ENCODE measurements at regions of chr14 and their contacts with region 1.

Region 1: GRCh38 chr14:61837336-61838229 is 75.4 kb downstream of the SNAPC1 start:
- DNase-seq: peak; percentile 88
- H3K4me3 Mint-ChIP-seq: no peak overlapping the region
- H3K27ac Mint-ChIP-seq: no peak overlapping the region
- H3K4me1 Mint-ChIP-seq: peaks cover 12% of the 10 kb centered on the region
- H3K27me3 Mint-ChIP-seq: no peaks in the 10 kb centered on the region

Region 2: GRCh38 chr14:61456720-61457119 is 380.9 kb before region 1 on chr14:
- CTCF ChIA-PET with region 1: interaction called, 63 read pairs
- intact Hi-C with region 1: loop called (anchors 1 kb)
- DNase-seq: peak; percentile 94
- H3K4me3 Mint-ChIP-seq: no peak overlapping the region
- H3K27ac Mint-ChIP-seq: peak overlapping the region; percentile 66
- H3K4me1 Mint-ChIP-seq: peaks cover 82% of the 10 kb centered on the region
- H3K27me3 Mint-ChIP-seq: no peaks in the 10 kb centered on the region

Region 3: GRCh38 chr14:61503167-61503801 is 334.3 kb before region 1 on chr14:
- CTCF ChIA-PET with region 1: interaction called, 6 read pairs
- intact Hi-C with region 1: loop called (anchors 1 kb)
- DNase-seq: peak; percentile 92
- H3K4me3 Mint-ChIP-seq: peak overlapping the region; percentile 66
- H3K27ac Mint-ChIP-seq: peak overlapping the region; percentile 100
- H3K4me1 Mint-ChIP-seq: peaks cover 97% of the 10 kb centered on the region
- H3K27me3 Mint-ChIP-seq: no peaks in the 10 kb centered on the region

Region 4: DNA sequence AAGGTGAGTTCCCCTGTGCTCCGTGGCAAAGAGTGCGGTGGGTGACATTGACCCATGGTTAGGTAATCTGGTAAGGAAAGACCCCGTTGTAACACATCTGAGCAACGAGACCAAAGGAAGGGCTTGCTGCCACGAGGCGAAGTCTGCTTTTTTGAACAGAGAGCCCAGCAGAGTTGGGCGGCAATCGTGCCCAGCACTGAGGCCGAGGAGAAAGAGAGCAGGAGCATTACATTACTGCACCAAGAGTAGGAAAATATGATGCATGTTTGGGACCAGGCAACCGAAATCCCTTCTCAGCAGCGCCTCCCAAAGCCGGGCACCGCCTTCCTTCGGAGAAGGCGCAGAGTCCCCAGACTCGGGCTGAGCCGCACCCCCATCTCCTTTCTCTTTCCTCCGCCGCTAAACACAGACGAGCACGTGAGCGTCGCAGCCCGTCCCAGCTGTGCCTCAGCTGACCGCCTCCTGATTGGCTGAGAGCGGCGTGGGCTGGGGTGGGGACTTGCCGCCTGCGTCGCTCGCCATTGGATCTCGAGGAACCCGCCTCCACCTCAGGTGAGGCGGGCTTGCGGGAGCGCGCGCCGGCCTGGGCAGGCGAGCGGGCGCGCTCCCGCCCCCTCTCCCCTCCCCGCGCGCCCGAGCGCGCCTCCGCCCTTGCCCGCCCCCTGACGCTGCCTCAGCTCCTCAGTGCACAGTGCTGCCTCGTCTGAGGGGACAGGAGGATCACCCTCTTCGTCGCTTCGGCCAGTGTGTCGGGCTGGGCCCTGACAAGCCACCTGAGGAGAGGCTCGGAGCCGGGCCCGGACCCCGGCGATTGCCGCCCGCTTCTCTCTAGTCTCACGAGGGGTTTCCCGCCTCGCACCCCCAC is 142.5 kb before region 1 on chr14 and contains the start of gene HIF1A:
- CTCF ChIA-PET with region 1: interaction called, 10 read pairs
- intact Hi-C with region 1: no loop called
- DNase-seq: peak; percentile 98
- H3K4me3 Mint-ChIP-seq: peak within 1 kb of the TSS; percentile 94
- H3K27ac Mint-ChIP-seq: peak within 1 kb of the TSS; percentile 93
- H3K4me1 Mint-ChIP-seq: peaks cover 44% of the 10 kb centered on the region
- H3K27me3 Mint-ChIP-seq: no peaks in the 10 kb centered on the region
- total RNA-seq, gene HIF1A: 398 to 417 TPM

Region 5: GRCh38 chr14:61750708-61751474 is 86.7 kb before region 1 on chr14:
- CTCF ChIA-PET with region 1: interaction called, 18 read pairs
- intact Hi-C with region 1: loop called (anchors 1 kb)
- DNase-seq: peak; percentile 87
- H3K4me3 Mint-ChIP-seq: peak overlapping the region; percentile 75
- H3K27ac Mint-ChIP-seq: peak overlapping the region; percentile 75
- H3K4me1 Mint-ChIP-seq: peaks cover 24% of the 10 kb centered on the region
- H3K27me3 Mint-ChIP-seq: no peaks in the 10 kb centered on the region

Region 6: DNA sequence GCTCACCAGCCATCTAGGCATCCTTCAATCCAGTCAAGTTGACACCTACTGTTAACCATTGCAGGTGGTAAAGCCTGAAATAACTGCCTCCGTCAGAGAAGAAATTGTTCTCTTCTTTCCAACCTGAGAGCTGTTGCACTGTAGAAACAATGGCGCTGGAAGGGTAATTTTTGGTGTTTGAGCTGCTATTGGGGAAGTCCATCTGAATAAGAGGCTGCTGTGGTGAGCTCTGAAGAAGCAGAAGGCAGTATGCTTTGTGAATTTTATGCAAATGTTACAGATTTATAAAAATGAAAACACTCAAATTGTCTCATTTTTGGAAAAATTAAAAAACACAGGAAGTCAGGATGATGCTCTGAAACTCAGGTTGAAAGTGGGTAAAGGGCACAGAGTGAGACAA is 15.1 kb before region 1 on chr14:
- CTCF ChIA-PET with region 1: interaction called, 11 read pairs
- intact Hi-C with region 1: no loop called
- DNase-seq: peak; percentile 46
- H3K4me3 Mint-ChIP-seq: no peak overlapping the region
- H3K27ac Mint-ChIP-seq: peak overlapping the region; percentile 30
- H3K4me1 Mint-ChIP-seq: peaks cover 9% of the 10 kb centered on the region
- H3K27me3 Mint-ChIP-seq: peaks cover 3% of the 10 kb centered on the region

Measured in activated naive CD4-positive, alpha-beta T cell treated with anti-CD3 and anti-CD28 coated beads for 36 hours (primary cell).